Adrenal gland (tissue), 19 donors: ENCODE measurements at regions of chr15 and their contacts with region 1.

Region 1: DNA sequence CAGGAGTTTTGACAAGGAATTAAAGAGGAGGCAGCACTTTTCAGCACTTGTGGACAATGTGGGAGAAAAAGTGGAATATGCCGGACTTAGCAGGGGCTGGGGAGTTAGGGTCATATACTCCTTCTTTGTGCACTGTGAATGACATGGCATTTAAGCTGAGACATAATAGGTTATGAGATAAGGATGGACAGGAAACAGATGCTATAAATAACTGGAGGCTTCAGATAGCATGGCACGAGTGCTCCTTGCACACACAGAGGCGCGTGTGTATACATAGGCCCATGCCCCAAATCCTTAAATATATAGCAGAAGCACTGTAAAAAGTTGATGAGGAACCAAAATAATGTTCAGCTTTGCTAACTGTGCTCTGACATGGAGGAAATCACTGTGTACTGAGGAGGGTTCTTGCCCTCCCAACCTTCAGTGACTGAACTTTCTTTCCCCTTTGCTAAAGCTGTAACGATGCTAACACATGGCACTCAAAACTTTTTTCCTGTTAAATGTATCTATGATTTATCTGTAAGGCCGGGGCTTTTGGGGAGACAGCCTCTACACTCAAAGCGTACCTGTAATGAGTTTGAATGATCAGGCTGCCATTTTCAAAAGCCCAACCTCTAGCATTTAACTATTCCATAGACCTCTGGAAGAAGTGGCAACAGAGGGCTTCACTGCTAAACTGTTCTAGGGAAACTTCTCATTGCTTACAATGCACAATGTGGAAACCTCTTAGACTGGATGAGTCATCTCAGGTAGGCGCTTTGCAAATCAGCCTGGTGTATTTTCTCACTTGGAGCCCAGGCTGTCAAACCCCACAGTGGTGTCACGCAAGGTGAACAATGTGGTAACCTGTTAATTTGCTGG is 784.6 kb downstream of the NR2F2 start:
- DNase-seq: no peak
- H3K4me3 ChIP-seq: no peak overlapping the region
- H3K27ac ChIP-seq: no peak overlapping the region
- H3K4me1 ChIP-seq: no peaks in the 10 kb centered on the region
- H3K27me3 ChIP-seq: no peaks in the 10 kb centered on the region
- CTCF ChIP-seq: no peak
- POLR2A ChIP-seq: no peak

Region 2: GRCh38 chr15:97177151-97177577 is 62.0 kb after region 1 on chr15:
- intact Hi-C with region 1: loop called in 1 of 2 experiments (anchors 10 kb)
- DNase-seq: no peak
- H3K4me3 ChIP-seq: no peak overlapping the region
- H3K27ac ChIP-seq: no peak overlapping the region
- H3K4me1 ChIP-seq: no peaks in the 10 kb centered on the region
- H3K27me3 ChIP-seq: no peaks in the 10 kb centered on the region
- CTCF ChIP-seq: no peak
- POLR2A ChIP-seq: no peak